ENCODE measurements at regions of chr5 and their contacts with region 1.

Region 1: DNA sequence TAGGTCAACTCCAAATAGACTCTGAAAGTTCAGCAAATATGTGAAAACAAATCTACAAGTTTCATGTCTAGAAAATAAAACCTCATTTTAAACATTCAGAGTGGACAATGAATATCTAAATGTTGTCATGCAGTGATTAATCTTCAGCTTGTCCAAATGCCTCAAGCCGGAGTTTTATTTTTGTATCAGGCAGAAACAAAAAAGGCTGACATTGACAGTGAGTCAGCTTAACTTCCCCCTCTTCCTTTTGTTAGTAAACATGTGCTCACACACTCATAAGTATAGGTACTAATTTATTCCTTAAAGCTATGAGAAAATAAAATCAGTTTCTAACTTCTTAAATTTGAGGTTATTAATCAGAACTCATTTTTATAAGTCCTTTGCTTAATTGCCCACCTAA is 467.9 kb upstream of the DAB2 start:
- DNase-seq: peak; percentile 60
- ATAC-seq: peak; percentile 64
- H3K4me3 ChIP-seq: no peak overlapping the region
- H3K27ac ChIP-seq: no peak overlapping the region
- H3K4me1 ChIP-seq: peaks cover 8% of the 10 kb centered on the region; the same call in 1 of the 2 replicates
- H3K27me3 ChIP-seq: no peaks in the 10 kb centered on the region
- CTCF ChIP-seq: no peak

Region 2: DNA sequence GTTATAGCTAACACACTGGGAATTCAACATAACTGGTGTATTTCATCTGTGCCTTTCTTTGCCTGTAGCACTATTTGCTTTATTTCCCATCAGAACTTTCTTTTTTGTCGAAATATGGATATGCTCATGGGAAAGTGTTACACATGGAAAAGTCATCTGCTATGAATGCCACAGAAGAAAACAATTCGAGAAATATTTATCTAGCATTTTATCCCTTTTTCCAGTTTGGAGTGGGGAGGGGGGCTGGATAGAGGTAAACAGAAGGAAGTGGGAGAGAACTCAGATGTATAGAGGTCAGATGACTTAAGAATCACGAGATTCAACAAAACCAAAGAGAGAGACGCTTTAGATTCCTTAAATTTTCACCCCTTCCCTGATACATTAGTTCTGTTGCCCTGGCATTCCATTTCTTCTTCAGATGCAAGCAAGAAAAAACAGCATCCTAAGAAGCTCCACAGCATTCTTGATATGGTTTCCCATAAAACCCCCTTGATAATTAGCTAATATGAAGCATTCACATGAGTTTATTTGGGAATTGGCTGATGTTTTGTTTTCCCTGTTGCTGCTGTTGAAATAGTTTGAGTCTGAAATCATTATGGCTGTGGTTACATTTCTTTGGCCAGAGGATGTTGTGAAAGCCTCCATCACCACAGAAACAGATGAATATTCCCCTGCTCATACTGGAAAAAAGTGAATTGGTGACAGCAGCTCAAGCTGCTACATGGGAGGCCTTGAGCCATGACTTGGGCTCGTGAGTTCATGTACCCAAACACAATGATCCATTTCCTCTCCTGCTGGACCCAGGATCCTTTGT is 132.1 kb before region 1 on chr5:
- CTCF ChIA-PET with region 1: no interaction called
- POLR2A ChIA-PET with region 1: no interaction called
- intact Hi-C with region 1: loop called (anchors 10 kb)
- DNase-seq: peak; percentile 55
- ATAC-seq: peak; percentile 52; the same call in 1 of the 2 replicates
- H3K4me3 ChIP-seq: no peak overlapping the region
- H3K27ac ChIP-seq: no peak overlapping the region
- H3K4me1 ChIP-seq: peaks cover 10% of the 10 kb centered on the region
- H3K27me3 ChIP-seq: no peaks in the 10 kb centered on the region
- CTCF ChIP-seq: no peak

Region 3: GRCh38 chr5:39863926-39864552 is 28.7 kb before region 1 on chr5:
- CTCF ChIA-PET with region 1: no interaction called
- POLR2A ChIA-PET with region 1: no interaction called
- intact Hi-C with region 1: no loop called
- DNase-seq: no peak
- ATAC-seq: no peak
- H3K4me3 ChIP-seq: no peak overlapping the region
- H3K27ac ChIP-seq: no peak overlapping the region
- H3K4me1 ChIP-seq: no peaks in the 10 kb centered on the region
- H3K27me3 ChIP-seq: no peaks in the 10 kb centered on the region
- CTCF ChIP-seq: no peak

Region 4: GRCh38 chr5:39919876-39920275 is 27.2 kb after region 1 on chr5:
- CTCF ChIA-PET with region 1: no interaction called
- POLR2A ChIA-PET with region 1: no interaction called
- intact Hi-C with region 1: no loop called
- DNase-seq: no peak
- ATAC-seq: no peak
- H3K4me3 ChIP-seq: no peak overlapping the region
- H3K27ac ChIP-seq: no peak overlapping the region
- H3K4me1 ChIP-seq: no peaks in the 10 kb centered on the region
- H3K27me3 ChIP-seq: no peaks in the 10 kb centered on the region
- CTCF ChIP-seq: no peak

Region 5: GRCh38 chr5:39948867-39949468 is 56.3 kb after region 1 on chr5:
- CTCF ChIA-PET with region 1: no interaction called
- POLR2A ChIA-PET with region 1: no interaction called
- intact Hi-C with region 1: no loop called
- DNase-seq: peak; percentile 89
- ATAC-seq: peak; percentile 81
- H3K4me3 ChIP-seq: no peak overlapping the region
- H3K27ac ChIP-seq: no peak overlapping the region
- H3K4me1 ChIP-seq: no peaks in the 10 kb centered on the region
- H3K27me3 ChIP-seq: no peaks in the 10 kb centered on the region
- CTCF ChIP-seq: peak; percentile 93